Heart right ventricle (tissue), 16 donors: ENCODE measurements at regions of chr2 and their contacts with region 1.

Region 1: GRCh38 chr2:134173338-134174016 is 80.4 kb upstream of the MGAT5 start:
- DNase-seq: peak; percentile 50 to 67
- ATAC-seq: peak; percentile 64 to 83 (median 76)
- H3K4me3 ChIP-seq: no peak overlapping the region
- H3K27ac ChIP-seq: peak overlapping the region in 9 of 10 donors; percentile 64 to 88 (median 82)
- H3K4me1 ChIP-seq: peaks cover 12 to 86% (median 72%) of the 10 kb centered on the region in 9 donors
- H3K27me3 ChIP-seq: no peaks in the 10 kb centered on the region
- CTCF ChIP-seq: no peak

Region 2: GRCh38 chr2:134108113-134108512 is 65.4 kb before region 1 on chr2:
- intact Hi-C with region 1: no loop called
- DNase-seq: no peak
- ATAC-seq: peak in 2 of 8 donors; percentile 27 to 41
- H3K4me3 ChIP-seq: no peak overlapping the region
- H3K27ac ChIP-seq: no peak overlapping the region
- H3K4me1 ChIP-seq: peaks cover 0 to 5% (median 0%) of the 10 kb centered on the region in 9 donors
- H3K27me3 ChIP-seq: no peaks in the 10 kb centered on the region
- CTCF ChIP-seq: no peak

Region 3: DNA sequence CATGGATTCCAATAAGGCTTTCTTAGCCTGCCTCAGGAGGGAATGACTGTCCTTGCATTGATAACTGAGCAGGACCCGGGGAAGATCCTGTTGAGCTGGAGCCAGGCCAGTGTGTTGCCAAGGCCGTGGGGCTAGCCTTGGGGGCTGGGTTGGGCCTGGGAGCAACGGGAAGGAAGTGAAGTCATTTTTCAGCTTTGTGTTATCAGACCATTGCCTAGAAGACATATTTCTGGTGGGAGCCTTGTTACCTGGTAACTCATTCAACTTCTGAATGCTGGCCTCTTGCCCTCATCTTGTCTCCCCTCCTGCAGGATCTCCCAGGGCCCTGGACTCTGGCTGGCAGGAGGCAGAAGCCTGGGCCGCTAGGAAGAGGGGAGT is 12.3 kb before region 1 on chr2:
- intact Hi-C with region 1: loop called in 1 of 10 experiments (anchors 2 kb)
- DNase-seq: peak; percentile 51 to 54
- ATAC-seq: peak; percentile 47 to 79 (median 62)
- H3K4me3 ChIP-seq: no peak overlapping the region
- H3K27ac ChIP-seq: peak overlapping the region in 6 of 10 donors; percentile 12 to 65 (median 35)
- H3K4me1 ChIP-seq: peaks cover 18 to 88% (median 77%) of the 10 kb centered on the region in 9 donors
- H3K27me3 ChIP-seq: no peaks in the 10 kb centered on the region
- CTCF ChIP-seq: no peak